ENCODE measurements at regions of chr2 and their contacts with region 1.

Region 1: DNA sequence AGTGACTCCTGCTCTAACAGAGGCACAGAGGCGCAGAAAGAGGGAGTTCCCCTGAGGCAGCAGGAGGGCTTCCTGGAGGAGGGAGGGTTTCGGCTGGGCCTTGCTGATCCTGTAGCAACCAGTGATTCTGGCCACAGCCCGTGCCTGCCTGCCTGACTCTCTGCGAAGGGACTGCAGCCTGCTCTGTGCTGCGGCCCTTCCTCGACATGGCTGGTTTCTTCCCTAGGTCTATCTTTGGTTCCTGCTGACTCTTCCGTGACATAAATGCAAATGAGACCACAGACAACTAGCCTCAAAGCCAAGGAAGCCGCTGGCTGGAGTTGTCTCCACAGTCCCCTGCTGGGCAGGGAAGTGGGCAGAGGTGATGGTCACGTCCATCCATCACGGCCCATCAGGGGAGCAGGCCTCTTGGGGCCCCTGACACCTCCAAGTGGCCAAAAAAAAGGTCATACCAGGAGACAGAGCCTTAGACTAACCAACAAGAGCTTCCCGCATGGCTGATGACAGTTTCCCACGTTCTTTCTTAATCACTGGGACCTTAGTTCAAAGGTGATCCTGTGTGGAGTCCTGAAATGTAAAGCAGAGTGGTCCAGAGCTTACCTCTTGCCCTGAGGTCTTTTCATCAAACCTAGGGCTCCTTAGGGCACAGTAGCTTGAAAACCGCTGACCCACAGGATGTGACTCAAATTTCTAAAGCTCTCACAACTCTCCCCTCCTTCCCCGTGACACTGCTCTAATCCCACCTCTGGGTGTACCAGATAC is 55.3 kb downstream of the HS1BP3 start:
- DNase-seq: peak; percentile 66
- ATAC-seq: no peak
- H3K4me3 ChIP-seq: no peak overlapping the region
- H3K27ac ChIP-seq: peak overlapping the region; percentile 97
- H3K4me1 ChIP-seq: peaks cover 98% of the 10 kb centered on the region
- H3K27me3 ChIP-seq: no peaks in the 10 kb centered on the region; a peak in 1 of 5 replicates
- CTCF ChIP-seq: no peak
- EP300 ChIP-seq: peak in 1 of 2 experiments; percentile 62; a peak in 1 of 4 replicates
- POLR2A ChIP-seq: peak in 1 of 2 experiments; percentile 4; a peak in 1 of 4 replicates
- RAD21 ChIP-seq: peak; percentile 33; the same call in 1 of the 2 replicates

Region 2: DNA sequence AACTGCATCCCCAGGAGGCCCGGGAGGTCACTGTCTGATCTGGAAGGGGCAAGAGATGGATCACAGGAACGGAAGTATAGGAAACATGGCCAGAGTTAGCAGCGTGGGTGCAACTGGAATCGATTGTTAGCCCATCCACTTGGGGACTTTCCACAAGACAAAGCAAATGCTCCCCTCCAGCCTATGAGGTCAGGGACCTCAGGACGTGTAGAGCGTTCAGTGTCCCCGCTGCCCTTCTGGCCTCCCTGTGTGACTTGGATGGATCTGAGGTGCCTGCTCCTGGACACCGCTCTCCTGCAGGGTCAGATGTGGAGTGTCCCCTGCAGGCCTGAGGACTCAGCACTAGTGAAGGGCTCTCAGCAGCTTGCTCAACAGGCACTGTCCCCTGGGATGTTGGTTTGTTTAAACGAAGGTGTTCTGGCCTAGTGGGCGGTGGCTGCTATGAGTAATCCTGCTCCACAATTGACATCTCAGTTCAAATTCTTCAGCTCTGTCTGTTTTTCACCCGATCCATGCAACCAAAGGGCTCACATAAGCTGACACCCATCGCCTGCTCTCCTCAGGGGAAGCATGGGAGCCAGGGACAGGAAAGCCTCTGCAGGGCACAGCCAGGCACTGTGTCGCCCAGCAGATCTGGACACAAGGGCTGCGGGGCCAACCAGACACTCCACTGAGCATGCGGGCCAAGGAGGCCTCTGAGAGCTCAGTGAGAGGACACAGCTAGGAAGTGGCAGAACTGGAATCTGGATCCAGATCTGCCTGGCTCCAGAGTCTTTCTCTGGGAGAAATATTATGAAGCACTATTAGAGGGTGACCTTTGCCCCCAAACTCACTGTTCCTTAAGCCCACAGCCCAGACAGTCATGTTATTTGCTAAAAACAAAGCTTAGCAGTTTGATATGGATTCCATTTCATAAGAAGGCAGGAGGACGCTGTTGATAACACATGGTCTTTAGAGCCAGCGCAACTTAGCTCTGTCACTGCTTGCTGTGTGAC is 70.3 kb before region 1 on chr2:
- CTCF ChIA-PET with region 1: no interaction called
- POLR2A ChIA-PET with region 1: interaction called, 41 read pairs
- in situ Hi-C with region 1: no loop called
- intact Hi-C with region 1: loop called (anchors 2 kb)
- DNase-seq: peak; percentile 96
- ATAC-seq: peak; percentile 96
- H3K4me3 ChIP-seq: peak overlapping the region; percentile 2 to 56 (median 21); a peak in 5 of 6 replicates
- H3K27ac ChIP-seq: peak overlapping the region; percentile 69
- H3K4me1 ChIP-seq: peaks cover 81% of the 10 kb centered on the region
- H3K27me3 ChIP-seq: no peaks in the 10 kb centered on the region
- CTCF ChIP-seq: peak; percentile 80
- EP300 ChIP-seq: peak; percentile 48 to 53; a peak in 3 of 4 replicates
- POLR2A ChIP-seq: peak in 1 of 2 experiments; percentile 70; a peak in 2 of 4 replicates
- RAD21 ChIP-seq: peak; percentile 82

Region 3: GRCh38 chr2:20606198-20606597 is 10.6 kb after region 1 on chr2:
- CTCF ChIA-PET with region 1: no interaction called
- POLR2A ChIA-PET with region 1: interaction called, 78 read pairs
- in situ Hi-C with region 1: no loop called
- intact Hi-C with region 1: loop called (anchors 2 kb)
- DNase-seq: no peak
- ATAC-seq: no peak
- H3K4me3 ChIP-seq: no peak overlapping the region
- H3K27ac ChIP-seq: no peak overlapping the region
- H3K4me1 ChIP-seq: peaks cover 30% of the 10 kb centered on the region
- H3K27me3 ChIP-seq: no peaks in the 10 kb centered on the region
- CTCF ChIP-seq: no peak
- EP300 ChIP-seq: no peak
- POLR2A ChIP-seq: no peak
- RAD21 ChIP-seq: no peak

Region 4: GRCh38 chr2:20617892-20618467 is 22.4 kb after region 1 on chr2:
- CTCF ChIA-PET with region 1: interaction called, 6 read pairs
- POLR2A ChIA-PET with region 1: interaction called, 63 read pairs
- in situ Hi-C with region 1: no loop called
- intact Hi-C with region 1: no loop called
- DNase-seq: peak; percentile 94
- ATAC-seq: peak; percentile 92
- H3K4me3 ChIP-seq: no peak overlapping the region
- H3K27ac ChIP-seq: peak overlapping the region; percentile 95
- H3K4me1 ChIP-seq: peaks cover 63% of the 10 kb centered on the region
- H3K27me3 ChIP-seq: no peaks in the 10 kb centered on the region
- CTCF ChIP-seq: peak; percentile 60
- EP300 ChIP-seq: peak; percentile 49 to 56; a peak in 2 of 4 replicates
- POLR2A ChIP-seq: peak in 1 of 2 experiments; percentile 53; a peak in 1 of 4 replicates
- RAD21 ChIP-seq: peak; percentile 92

Region 5: GRCh38 chr2:20642055-20642971 is 46.7 kb after region 1 on chr2:
- CTCF ChIA-PET with region 1: no interaction called
- POLR2A ChIA-PET with region 1: no interaction called
- in situ Hi-C with region 1: no loop called
- intact Hi-C with region 1: no loop called
- DNase-seq: peak; percentile 64
- ATAC-seq: peak; percentile 98
- H3K4me3 ChIP-seq: no peak overlapping the region
- H3K27ac ChIP-seq: no peak overlapping the region
- H3K4me1 ChIP-seq: peaks cover 7% of the 10 kb centered on the region
- H3K27me3 ChIP-seq: no peaks in the 10 kb centered on the region
- CTCF ChIP-seq: peak; percentile 99
- EP300 ChIP-seq: peak in 1 of 2 experiments; percentile 49; a peak in 1 of 4 replicates
- POLR2A ChIP-seq: no peak
- RAD21 ChIP-seq: peak; percentile 100

Region 6: DNA sequence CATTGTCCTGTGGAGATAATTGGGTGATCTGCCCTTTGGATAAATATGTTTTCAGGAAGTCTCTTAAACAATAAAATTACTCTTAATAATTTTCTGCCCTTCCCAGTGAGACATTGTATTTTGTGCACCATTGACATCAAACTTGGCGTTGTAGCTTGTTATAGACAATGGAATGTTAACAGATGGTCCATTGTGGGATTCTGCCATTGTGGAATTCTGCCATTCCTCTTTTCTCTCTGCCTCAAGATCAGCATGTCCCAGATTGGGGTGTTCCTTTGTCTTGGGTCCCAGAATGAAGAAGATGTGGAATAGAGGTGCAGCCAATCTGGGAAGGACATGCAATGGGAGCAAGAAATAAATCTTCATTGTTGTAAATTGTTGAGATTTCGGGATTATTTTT is 242.4 kb after region 1 on chr2:
- CTCF ChIA-PET with region 1: no interaction called
- POLR2A ChIA-PET with region 1: no interaction called
- in situ Hi-C with region 1: no loop called
- intact Hi-C with region 1: no loop called
- DNase-seq: no peak
- ATAC-seq: no peak
- H3K4me3 ChIP-seq: no peak overlapping the region
- H3K27ac ChIP-seq: no peak overlapping the region
- H3K4me1 ChIP-seq: peaks cover 18% of the 10 kb centered on the region; the same call in 1 of the 2 replicates
- H3K27me3 ChIP-seq: peaks cover 0 to 4% of the 10 kb centered on the region in 2 experiments; a peak in 2 of 5 replicates
- CTCF ChIP-seq: no peak
- EP300 ChIP-seq: no peak
- POLR2A ChIP-seq: no peak
- RAD21 ChIP-seq: no peak

Measured in HepG2 (cell line).